Caco-2 (cell line): ENCODE measurements at regions of chr6 and their contacts with region 1.

Region 1: GRCh38 chr6:36964908-36965307 is 10.4 kb downstream of the PI16 start:
- DNase-seq: no peak
- H3K4me3 ChIP-seq: no peak overlapping the region
- H3K4me3 Mint-ChIP-seq: no peak overlapping the region
- H3K27ac Mint-ChIP-seq: no peak overlapping the region
- H3K4me1 ChIP-seq: 0 out of 2 replicates have a peak, but pooled peaks cover 4% of the 10 kb centered on the region
- H3K4me1 Mint-ChIP-seq: no peaks in the 10 kb centered on the region
- H3K27me3 ChIP-seq: no peaks in the 10 kb centered on the region
- H3K27me3 Mint-ChIP-seq: no peaks in the 10 kb centered on the region
- CTCF ChIP-seq: no peak

Region 2: DNA sequence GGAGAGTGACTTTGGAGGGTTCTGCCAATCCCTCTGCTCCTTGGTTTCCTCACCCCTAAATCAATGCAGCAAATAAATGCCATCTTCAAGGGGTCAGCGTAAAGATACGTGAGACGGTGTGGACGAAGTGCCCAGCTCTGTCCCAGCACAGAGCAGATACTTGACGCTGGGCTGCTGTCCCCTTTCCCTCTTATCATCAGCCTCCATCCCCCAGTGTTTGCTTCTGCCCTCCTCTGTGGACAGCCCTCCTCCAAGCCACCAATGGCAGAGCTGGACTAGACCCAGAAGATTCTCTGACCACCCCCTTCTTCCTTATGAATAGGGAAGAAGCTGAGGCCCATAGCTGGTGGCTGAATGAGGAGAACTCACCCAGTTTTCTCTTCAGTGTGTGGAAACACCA is 28.1 kb before region 1 on chr6:
- CTCF ChIA-PET with region 1: no interaction called
- POLR2A ChIA-PET with region 1: no interaction called
- intact Hi-C with region 1: loop called (anchors 1 kb)
- DNase-seq: no peak
- H3K4me3 ChIP-seq: no peak overlapping the region
- H3K4me3 Mint-ChIP-seq: no peak overlapping the region
- H3K27ac Mint-ChIP-seq: no peak overlapping the region
- H3K4me1 ChIP-seq: no peaks in the 10 kb centered on the region
- H3K4me1 Mint-ChIP-seq: no peaks in the 10 kb centered on the region
- H3K27me3 ChIP-seq: no peaks in the 10 kb centered on the region
- H3K27me3 Mint-ChIP-seq: no peaks in the 10 kb centered on the region
- CTCF ChIP-seq: no peak

Region 3: GRCh38 chr6:36947570-36948351 is 17.1 kb before region 1 on chr6:
- CTCF ChIA-PET with region 1: no interaction called
- POLR2A ChIA-PET with region 1: no interaction called
- intact Hi-C with region 1: no loop called
- DNase-seq: no peak
- H3K4me3 ChIP-seq: no peak overlapping the region
- H3K4me3 Mint-ChIP-seq: no peak overlapping the region
- H3K27ac Mint-ChIP-seq: no peak overlapping the region
- H3K4me1 ChIP-seq: no peaks in the 10 kb centered on the region
- H3K4me1 Mint-ChIP-seq: no peaks in the 10 kb centered on the region
- H3K27me3 ChIP-seq: no peaks in the 10 kb centered on the region
- H3K27me3 Mint-ChIP-seq: peaks cover 6% of the 10 kb centered on the region
- CTCF ChIP-seq: no peak